ENCODE measurements at regions of chr1 and their contacts with region 1.

Region 1: GRCh38 chr1:156601122-156601830 is at the start of gene GPATCH4:
- DNase-seq: peak; percentile 60 to 80 (median 74)
- ATAC-seq: peak; percentile 92 to 95 (median 93)
- H3K4me3 ChIP-seq: peak within 1 kb of the TSS; percentile 45 to 76 (median 65)
- H3K27ac ChIP-seq: peak within 1 kb of the TSS; percentile 9 to 66 (median 46)
- H3K4me1 ChIP-seq: peaks cover 6 to 16% (median 12%) of the 10 kb centered on the region in 3 donors
- H3K27me3 ChIP-seq: no peaks in the 10 kb centered on the region
- CTCF ChIP-seq: no peak
- total RNA-seq, gene GPATCH4: 6.4 to 16.0 (median 11.4) TPM

Region 2: GRCh38 chr1:156456622-156457465 is 144.4 kb before region 1 on chr1:
- intact Hi-C with region 1: loop called in 1 of 3 experiments (anchors 10 kb)
- DNase-seq: peak; percentile 94 to 99 (median 99)
- ATAC-seq: peak; percentile 88 to 94 (median 88)
- H3K4me3 ChIP-seq: peak overlapping the region; percentile 24 to 51 (median 46)
- H3K27ac ChIP-seq: peak overlapping the region; percentile 95 to 99 (median 96)
- H3K4me1 ChIP-seq: peaks cover 3 to 9% (median 3%) of the 10 kb centered on the region in 3 donors
- H3K27me3 ChIP-seq: no peaks in the 10 kb centered on the region
- CTCF ChIP-seq: no peak

Measured in pancreas (tissue), 10 donors.